MCF 10A (cell line): ENCODE measurements at regions of chr9 and their contacts with region 1.

Region 1: DNA sequence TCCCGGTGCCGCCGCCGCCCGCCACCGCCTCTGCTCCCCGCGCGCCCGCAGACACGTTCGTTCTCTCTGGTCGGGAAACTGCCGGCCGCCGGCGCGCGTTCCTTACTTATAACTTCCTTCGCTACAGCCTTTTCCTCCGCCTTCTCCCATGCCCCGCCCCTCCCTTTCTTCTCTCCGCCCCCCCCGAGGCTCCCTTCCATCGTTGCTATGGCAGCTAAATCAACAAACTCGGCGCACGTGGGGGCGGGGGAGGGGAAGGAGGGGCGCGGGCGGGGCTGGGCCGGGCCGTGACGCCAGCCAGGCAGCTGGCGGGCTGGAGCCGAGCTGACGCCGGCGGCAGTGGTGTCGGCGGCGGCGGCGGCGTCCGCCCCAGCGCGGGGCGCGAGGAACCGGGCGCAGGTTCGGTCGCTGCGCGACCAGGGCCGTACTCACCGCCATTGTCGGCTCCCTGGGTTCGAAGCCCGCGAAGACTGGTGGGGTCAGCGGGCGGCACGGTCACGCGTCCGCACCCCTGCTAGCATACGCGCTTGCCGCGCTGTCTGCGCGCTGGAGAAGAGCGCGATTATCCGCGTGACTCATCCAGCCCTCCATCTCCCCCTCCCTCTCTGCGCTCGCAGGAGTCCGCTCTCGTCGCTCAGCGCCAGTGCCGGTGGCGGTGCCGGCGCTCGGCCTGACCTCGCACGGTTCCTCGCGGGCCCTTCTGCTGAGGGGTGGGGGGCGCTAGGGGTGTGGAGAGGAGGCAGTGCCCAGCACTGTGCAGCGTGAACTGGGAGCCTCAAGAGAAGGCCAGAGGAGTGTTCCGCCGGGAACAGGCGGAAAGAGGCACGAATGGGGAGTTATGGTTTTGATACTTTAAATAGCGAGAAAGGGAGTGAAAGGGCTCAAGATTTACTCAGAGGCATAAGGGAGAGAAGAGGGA is at the start of gene KLF4:
- DNase-seq: peak; percentile 95
- H3K4me3 Mint-ChIP-seq: peak within 1 kb of the TSS; percentile 94
- H3K27ac Mint-ChIP-seq: peak within 1 kb of the TSS; percentile 96
- H3K4me1 Mint-ChIP-seq: peaks cover 18% of the 10 kb centered on the region
- H3K27me3 Mint-ChIP-seq: no peaks in the 10 kb centered on the region
- CTCF ChIP-seq: no peak
- total RNA-seq, gene KLF4: 94.9 and 96.0 TPM in 2 replicates

Region 2: GRCh38 chr9:107222020-107222522 is 267.9 kb before region 1 on chr9:
- CTCF ChIA-PET with region 1: no interaction called
- POLR2A ChIA-PET with region 1: no interaction called
- intact Hi-C with region 1: no loop called
- DNase-seq: no peak
- H3K4me3 Mint-ChIP-seq: no peak overlapping the region
- H3K27ac Mint-ChIP-seq: no peak overlapping the region
- H3K4me1 Mint-ChIP-seq: no peaks in the 10 kb centered on the region
- H3K27me3 Mint-ChIP-seq: no peaks in the 10 kb centered on the region
- CTCF ChIP-seq: no peak

Region 3: DNA sequence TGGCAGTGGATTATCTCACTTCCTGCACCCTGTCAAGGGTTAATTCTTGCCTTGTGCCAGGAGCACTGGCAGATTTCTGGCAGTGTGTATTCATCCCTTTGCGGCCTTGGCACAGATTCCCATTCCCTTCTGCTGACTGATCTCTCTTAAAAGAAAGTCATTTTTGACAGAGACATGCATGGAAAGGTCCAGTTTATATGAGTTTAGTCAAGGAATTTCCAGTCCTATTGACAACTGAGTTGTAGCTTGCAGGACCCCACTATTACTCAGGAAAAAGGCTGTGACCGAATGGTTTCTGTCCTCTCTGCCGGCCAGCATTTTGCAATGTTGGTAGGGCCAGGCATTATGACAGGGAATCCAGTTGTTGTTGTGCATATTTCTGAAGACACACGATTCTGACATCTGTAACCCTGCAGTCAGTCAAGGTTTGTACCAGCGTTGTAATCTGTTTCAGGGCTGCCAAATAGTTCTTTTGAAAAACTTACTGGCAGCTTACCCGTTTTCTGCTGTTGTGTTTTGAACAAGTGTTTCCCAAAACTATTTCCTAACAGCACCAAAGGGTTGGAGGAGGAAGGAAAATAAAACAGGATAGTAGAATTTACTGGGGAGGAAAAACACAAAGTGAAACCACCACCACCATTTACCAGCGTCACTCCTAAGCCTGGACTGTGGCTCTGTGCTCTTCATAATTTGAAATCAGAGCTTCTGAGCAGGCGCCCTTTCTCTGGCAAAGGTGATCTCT is 243.0 kb after region 1 on chr9:
- CTCF ChIA-PET with region 1: interaction called, 7 read pairs
- POLR2A ChIA-PET with region 1: interaction called, 49 read pairs
- intact Hi-C with region 1: loop called (anchors 1 kb)
- DNase-seq: peak; percentile 90
- H3K4me3 Mint-ChIP-seq: peak overlapping the region; percentile 65
- H3K27ac Mint-ChIP-seq: peak overlapping the region; percentile 88
- H3K4me1 Mint-ChIP-seq: peaks cover 58% of the 10 kb centered on the region
- H3K27me3 Mint-ChIP-seq: no peaks in the 10 kb centered on the region
- CTCF ChIP-seq: no peak

Region 4: DNA sequence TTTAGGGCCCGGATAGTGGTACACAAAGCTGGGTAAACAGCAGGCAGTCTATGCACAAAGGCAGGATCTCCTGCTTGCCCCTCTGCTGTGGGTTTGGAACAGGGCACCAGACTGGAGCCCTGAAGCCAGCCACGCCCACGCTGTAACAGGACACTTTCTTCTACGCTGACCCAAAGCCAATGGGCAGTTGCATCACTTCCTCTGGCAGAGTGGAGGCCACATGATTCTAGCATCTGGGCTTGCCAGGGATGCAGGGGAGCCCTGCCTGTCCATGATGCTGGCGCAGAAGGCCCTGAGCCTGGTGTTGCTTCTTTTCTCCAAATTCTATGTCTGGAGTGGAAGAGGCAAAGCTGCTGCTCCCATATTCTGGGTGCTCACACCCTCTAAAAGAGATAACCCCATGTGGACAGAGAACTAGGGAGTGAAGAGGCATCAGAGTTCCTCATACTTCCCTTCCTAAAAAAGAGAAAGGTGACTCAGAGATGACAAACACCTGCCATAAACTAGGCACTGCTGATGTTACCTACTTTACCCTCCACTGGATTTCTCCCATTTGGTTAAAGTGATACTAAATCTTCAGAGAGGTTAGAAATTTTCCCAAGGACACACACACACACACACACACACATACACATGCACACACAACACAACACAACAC is 260.0 kb after region 1 on chr9:
- CTCF ChIA-PET with region 1: interaction called, 3 read pairs
- POLR2A ChIA-PET with region 1: interaction called, 17 read pairs
- intact Hi-C with region 1: loop called (anchors 5 kb)
- DNase-seq: peak; percentile 98
- H3K4me3 Mint-ChIP-seq: no peak overlapping the region
- H3K27ac Mint-ChIP-seq: peak overlapping the region; percentile 43
- H3K4me1 Mint-ChIP-seq: peaks cover 38% of the 10 kb centered on the region
- H3K27me3 Mint-ChIP-seq: no peaks in the 10 kb centered on the region
- CTCF ChIP-seq: no peak

Region 5: GRCh38 chr9:108259917-108260675 is 770.1 kb after region 1 on chr9:
- CTCF ChIA-PET with region 1: no interaction called
- POLR2A ChIA-PET with region 1: interaction called, 16 read pairs
- intact Hi-C with region 1: no loop called
- DNase-seq: peak; percentile 67
- H3K4me3 Mint-ChIP-seq: peak overlapping the region; percentile 17
- H3K27ac Mint-ChIP-seq: peak overlapping the region; percentile 93
- H3K4me1 Mint-ChIP-seq: peaks cover 20% of the 10 kb centered on the region
- H3K27me3 Mint-ChIP-seq: no peaks in the 10 kb centered on the region
- CTCF ChIP-seq: no peak

Region 6: DNA sequence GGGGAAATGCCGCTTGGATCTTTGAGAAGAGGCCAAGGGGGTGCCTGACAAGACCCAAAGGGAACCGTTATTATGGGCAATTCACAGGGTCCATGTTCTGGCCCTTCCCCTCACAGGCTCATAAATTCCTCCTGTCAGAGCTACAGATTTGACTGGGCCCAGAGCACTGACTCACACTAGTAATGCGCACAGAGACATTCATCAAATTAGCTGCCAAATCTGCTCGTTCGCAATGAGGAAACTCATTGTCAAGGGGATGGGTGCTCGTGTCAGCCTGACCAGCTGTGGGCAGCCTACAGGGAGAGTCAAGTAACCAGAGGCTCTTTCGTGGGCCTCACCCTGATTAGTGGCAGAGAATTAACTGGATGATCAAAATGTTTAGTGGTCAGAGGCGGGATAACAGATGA is 988.5 kb after region 1 on chr9:
- CTCF ChIA-PET with region 1: interaction called, 3 read pairs
- POLR2A ChIA-PET with region 1: interaction called, 9 read pairs
- intact Hi-C with region 1: loop called (anchors 10 kb)
- DNase-seq: peak; percentile 97
- H3K4me3 Mint-ChIP-seq: peak overlapping the region; percentile 37
- H3K27ac Mint-ChIP-seq: peak overlapping the region; percentile 89
- H3K4me1 Mint-ChIP-seq: peaks cover 47% of the 10 kb centered on the region
- H3K27me3 Mint-ChIP-seq: no peaks in the 10 kb centered on the region
- CTCF ChIP-seq: no peak